GM12878 (cell line): ENCODE measurements at regions of chr10 and their contacts with region 1.

Region 1: DNA sequence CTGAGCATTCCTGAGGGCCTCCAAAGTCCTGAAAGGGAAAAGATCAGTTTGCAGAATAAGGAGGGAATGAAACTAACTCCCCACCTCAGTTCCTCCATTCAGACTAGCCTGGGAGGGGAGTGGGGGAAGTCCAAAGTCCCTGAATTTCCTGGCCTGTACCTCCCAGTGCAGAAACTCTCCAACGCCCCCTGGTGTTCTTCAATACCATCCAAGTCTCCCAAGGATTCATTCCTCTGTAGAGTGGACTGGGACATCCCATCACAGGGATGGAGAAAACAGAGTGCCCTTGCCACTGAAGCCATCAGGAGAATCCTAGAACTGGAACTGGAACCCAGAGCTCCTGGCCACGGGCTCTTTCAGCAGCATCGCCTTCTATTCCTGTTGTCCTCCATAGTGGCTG is 1.6 kb upstream of the COL13A1 start:
- DNase-seq: no peak
- ATAC-seq: peak; percentile 60
- H3K4me3 ChIP-seq: no peak overlapping the region
- H3K27ac ChIP-seq: no peak overlapping the region
- H3K4me1 ChIP-seq: no peaks in the 10 kb centered on the region
- H3K27me3 ChIP-seq: peaks cover 9 to 18% of the 10 kb centered on the region in 2 experiments
- CTCF ChIP-seq: peak; percentile 53 to 58 (median 56); a peak in 5 of 6 replicates
- EP300 ChIP-seq: no peak
- POLR2A ChIP-seq: no peak
- RAD21 ChIP-seq: peak; percentile 43

Region 2: DNA sequence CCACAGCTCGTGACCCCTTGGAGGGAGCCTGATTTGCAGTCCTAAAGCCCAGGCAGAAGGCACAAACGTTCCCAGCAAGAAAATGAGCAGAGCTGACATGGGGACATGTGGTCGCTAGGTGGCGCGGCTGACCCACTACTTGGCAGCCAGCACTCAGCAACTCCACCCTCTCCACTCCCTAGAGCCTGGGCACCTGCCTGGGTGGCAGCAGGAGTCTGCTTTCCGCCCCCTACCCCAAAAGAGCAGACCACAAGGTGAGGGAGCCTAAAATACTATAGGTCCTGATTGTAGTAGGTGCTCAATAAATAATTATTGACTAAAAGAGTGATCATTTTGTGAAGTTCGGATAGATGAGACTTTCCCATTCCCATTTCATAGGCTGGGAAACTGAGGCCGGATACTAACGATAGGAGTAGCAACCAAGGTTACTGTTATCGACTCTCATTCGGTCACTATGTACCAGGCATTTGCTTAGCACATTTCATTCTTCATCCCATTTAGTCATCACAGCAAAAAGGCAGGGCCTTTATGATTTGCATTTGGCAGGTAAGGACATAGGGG is 284.3 kb before region 1 on chr10:
- CTCF ChIA-PET with region 1: interaction called, 6 read pairs
- POLR2A ChIA-PET with region 1: no interaction called
- RAD21 ChIA-PET with region 1: no interaction called
- SMC1A ChIA-PET with region 1: no interaction called
- in situ Hi-C with region 1: no loop called
- intact Hi-C with region 1: loop called (anchors 5 kb)
- DNase-seq: peak; percentile 16
- ATAC-seq: peak; percentile 100
- H3K4me3 ChIP-seq: no peak overlapping the region
- H3K27ac ChIP-seq: no peak overlapping the region
- H3K4me1 ChIP-seq: no peaks in the 10 kb centered on the region
- H3K27me3 ChIP-seq: no peaks in the 10 kb centered on the region; a peak in 1 of 4 replicates
- CTCF ChIP-seq: peak; percentile 92 to 98 (median 93); a peak in 5 of 6 replicates
- EP300 ChIP-seq: no peak
- POLR2A ChIP-seq: no peak
- RAD21 ChIP-seq: peak; percentile 85

Region 3: GRCh38 chr10:69644658-69645295 is 155.3 kb before region 1 on chr10:
- CTCF ChIA-PET with region 1: interaction called, 9 read pairs
- POLR2A ChIA-PET with region 1: no interaction called
- RAD21 ChIA-PET with region 1: no interaction called
- SMC1A ChIA-PET with region 1: interaction called, 3 read pairs
- in situ Hi-C with region 1: no loop called
- intact Hi-C with region 1: loop called (anchors 1 kb)
- DNase-seq: no peak
- ATAC-seq: peak; percentile 69
- H3K4me3 ChIP-seq: no peak overlapping the region
- H3K27ac ChIP-seq: no peak overlapping the region
- H3K4me1 ChIP-seq: no peaks in the 10 kb centered on the region
- H3K27me3 ChIP-seq: no peaks in the 10 kb centered on the region
- CTCF ChIP-seq: peak; percentile 68 to 77 (median 74)
- EP300 ChIP-seq: no peak
- POLR2A ChIP-seq: no peak
- RAD21 ChIP-seq: peak; percentile 59

Region 4: GRCh38 chr10:69749178-69750010 is 50.7 kb before region 1 on chr10:
- CTCF ChIA-PET with region 1: interaction called, 4 read pairs
- POLR2A ChIA-PET with region 1: no interaction called
- RAD21 ChIA-PET with region 1: no interaction called
- SMC1A ChIA-PET with region 1: no interaction called
- in situ Hi-C with region 1: no loop called
- intact Hi-C with region 1: loop called (anchors 5 kb)
- DNase-seq: no peak
- ATAC-seq: no peak
- H3K4me3 ChIP-seq: no peak overlapping the region
- H3K27ac ChIP-seq: no peak overlapping the region
- H3K4me1 ChIP-seq: peaks cover 7% of the 10 kb centered on the region
- H3K27me3 ChIP-seq: peaks cover under 1 to 1% of the 10 kb centered on the region in 2 experiments; a peak in 1 of 4 replicates
- CTCF ChIP-seq: no peak
- EP300 ChIP-seq: no peak
- POLR2A ChIP-seq: no peak
- RAD21 ChIP-seq: no peak

Region 5: DNA sequence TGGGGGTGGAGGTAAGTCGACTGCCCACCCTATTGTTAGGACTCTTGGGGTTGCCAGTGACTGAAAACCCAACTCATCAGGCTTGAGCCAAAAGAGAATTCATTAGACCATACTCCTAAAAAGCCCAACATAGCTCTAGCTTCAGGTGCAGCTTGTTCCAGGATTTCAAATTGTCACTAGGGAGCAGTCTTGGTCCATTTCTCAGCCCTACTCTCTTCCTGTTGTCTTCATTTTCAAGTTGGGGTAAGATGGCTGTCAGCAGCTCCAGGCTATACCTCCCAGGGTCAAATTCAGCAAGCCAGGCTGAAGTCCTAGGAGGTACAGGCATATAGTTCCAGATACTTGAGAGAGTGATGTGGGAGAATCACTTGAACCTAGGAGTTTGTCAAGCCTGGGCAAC is 13.3 kb before region 1 on chr10:
- CTCF ChIA-PET with region 1: interaction called, 17 read pairs
- POLR2A ChIA-PET with region 1: no interaction called
- RAD21 ChIA-PET with region 1: interaction called, 3 read pairs
- SMC1A ChIA-PET with region 1: no interaction called
- in situ Hi-C with region 1: no loop called
- intact Hi-C with region 1: no loop called
- DNase-seq: no peak
- ATAC-seq: no peak
- H3K4me3 ChIP-seq: no peak overlapping the region
- H3K27ac ChIP-seq: no peak overlapping the region
- H3K4me1 ChIP-seq: no peaks in the 10 kb centered on the region
- H3K27me3 ChIP-seq: peaks cover 0 to 1% of the 10 kb centered on the region in 2 experiments; a peak in 2 of 4 replicates
- CTCF ChIP-seq: peak in 2 of 3 experiments; percentile 9 to 16; a peak in 2 of 6 replicates
- EP300 ChIP-seq: no peak
- POLR2A ChIP-seq: no peak
- RAD21 ChIP-seq: peak; percentile 19; the same call in 1 of the 2 replicates